H1 (cell line): ENCODE measurements at regions of chr22 and their contacts with region 1.

Region 1: GRCh38 chr22:29202212-29203192 is 3.2 kb upstream of the EMID1 start:
- DNase-seq: no peak
- H3K4me3 ChIP-seq: no peak overlapping the region; a peak in 1 of 8 replicates
- H3K27ac ChIP-seq: no peak overlapping the region
- H3K4me1 ChIP-seq: peaks cover 0 to 13% (median 6%) of the 10 kb centered on the region in 4 experiments; a peak in 5 of 7 replicates
- H3K27me3 ChIP-seq: peaks cover 0 to 12% (median 3%) of the 10 kb centered on the region in 4 experiments; a peak in 5 of 7 replicates
- CTCF ChIP-seq: peak; percentile 65 to 80 (median 74)
- EP300 ChIP-seq: no peak
- POLR2A ChIP-seq: no peak
- RAD21 ChIP-seq: peak; percentile 73 to 77

Region 2: DNA sequence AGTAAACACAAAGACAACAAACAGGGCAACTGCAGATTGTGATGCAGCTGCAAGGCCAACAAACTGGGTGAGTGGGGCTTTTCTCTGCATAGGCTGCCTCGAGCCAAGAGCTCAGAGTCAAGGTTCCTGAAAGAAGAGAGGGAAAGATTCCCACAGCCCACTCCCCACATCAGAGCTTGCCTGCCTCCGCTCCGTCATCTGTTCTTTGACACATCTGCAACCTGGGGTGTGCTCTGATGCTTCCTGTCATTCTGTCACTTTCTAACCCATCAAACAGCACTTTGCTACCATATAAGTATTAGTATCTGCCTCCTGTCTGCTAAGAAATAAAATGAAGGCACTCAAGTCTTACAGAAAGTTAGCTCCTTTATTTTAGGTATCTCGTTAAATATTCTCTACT is 187.7 kb before region 1 on chr22:
- CTCF ChIA-PET with region 1: no interaction called
- POLR2A ChIA-PET with region 1: no interaction called
- DNase-seq: no peak
- H3K4me3 ChIP-seq: no peak overlapping the region
- H3K27ac ChIP-seq: no peak overlapping the region
- H3K4me1 ChIP-seq: peaks cover 3 to 18% (median 8%) of the 10 kb centered on the region in 4 experiments; a peak in 5 of 7 replicates
- H3K27me3 ChIP-seq: no peaks in the 10 kb centered on the region; a peak in 1 of 7 replicates
- CTCF ChIP-seq: no peak
- EP300 ChIP-seq: no peak
- POLR2A ChIP-seq: no peak
- RAD21 ChIP-seq: no peak

Region 3: GRCh38 chr22:29154364-29155048 is 48.0 kb before region 1 on chr22:
- CTCF ChIA-PET with region 1: interaction called, 11 read pairs
- POLR2A ChIA-PET with region 1: no interaction called
- DNase-seq: peak; percentile 39 to 95
- H3K4me3 ChIP-seq: no peak overlapping the region
- H3K27ac ChIP-seq: no peak overlapping the region
- H3K4me1 ChIP-seq: peaks cover 7 to 22% (median 10%) of the 10 kb centered on the region in 4 experiments; a peak in 6 of 7 replicates
- H3K27me3 ChIP-seq: no peaks in the 10 kb centered on the region
- CTCF ChIP-seq: peak; percentile 96 to 97 (median 96)
- EP300 ChIP-seq: no peak
- POLR2A ChIP-seq: no peak
- RAD21 ChIP-seq: peak; percentile 91 to 95

Region 4: GRCh38 chr22:29184849-29185490 is 17.5 kb before region 1 on chr22:
- CTCF ChIA-PET with region 1: interaction called, 13 read pairs
- POLR2A ChIA-PET with region 1: interaction called, 3 read pairs
- DNase-seq: no peak
- H3K4me3 ChIP-seq: no peak overlapping the region
- H3K27ac ChIP-seq: no peak overlapping the region
- H3K4me1 ChIP-seq: peaks cover 0 to 5% (median 0%) of the 10 kb centered on the region in 4 experiments; a peak in 2 of 7 replicates
- H3K27me3 ChIP-seq: no peaks in the 10 kb centered on the region
- CTCF ChIP-seq: no peak
- EP300 ChIP-seq: no peak
- POLR2A ChIP-seq: no peak
- RAD21 ChIP-seq: no peak

Region 5: GRCh38 chr22:29216873-29217666 is 14.6 kb after region 1 on chr22:
- CTCF ChIA-PET with region 1: interaction called, 54 read pairs
- POLR2A ChIA-PET with region 1: interaction called, 5 read pairs
- DNase-seq: no peak
- H3K4me3 ChIP-seq: no peak overlapping the region
- H3K27ac ChIP-seq: no peak overlapping the region
- H3K4me1 ChIP-seq: peaks cover 0 to 15% (median 8%) of the 10 kb centered on the region in 4 experiments; a peak in 6 of 7 replicates
- H3K27me3 ChIP-seq: no peaks in the 10 kb centered on the region
- CTCF ChIP-seq: no peak
- EP300 ChIP-seq: no peak
- POLR2A ChIP-seq: no peak
- RAD21 ChIP-seq: no peak

Region 6: GRCh38 chr22:29225422-29226131 is 23.1 kb after region 1 on chr22:
- CTCF ChIA-PET with region 1: interaction called, 54 read pairs
- POLR2A ChIA-PET with region 1: interaction called, 5 read pairs
- DNase-seq: no peak
- H3K4me3 ChIP-seq: no peak overlapping the region
- H3K27ac ChIP-seq: no peak overlapping the region
- H3K4me1 ChIP-seq: peaks cover 0 to 4% (median under 1%) of the 10 kb centered on the region in 4 experiments; a peak in 4 of 7 replicates
- H3K27me3 ChIP-seq: peaks cover 0 to 5% (median 0%) of the 10 kb centered on the region in 4 experiments; a peak in 2 of 7 replicates
- CTCF ChIP-seq: no peak
- EP300 ChIP-seq: no peak
- POLR2A ChIP-seq: no peak
- RAD21 ChIP-seq: no peak

Region 7: GRCh38 chr22:29251981-29252911 is 49.7 kb after region 1 on chr22:
- CTCF ChIA-PET with region 1: interaction called, 84 read pairs
- POLR2A ChIA-PET with region 1: interaction called, 3 read pairs
- DNase-seq: no peak
- H3K4me3 ChIP-seq: no peak overlapping the region
- H3K27ac ChIP-seq: no peak overlapping the region
- H3K4me1 ChIP-seq: peaks cover 0 to 6% (median 0%) of the 10 kb centered on the region in 4 experiments; a peak in 2 of 7 replicates
- H3K27me3 ChIP-seq: no peaks in the 10 kb centered on the region
- CTCF ChIP-seq: no peak
- EP300 ChIP-seq: no peak
- POLR2A ChIP-seq: no peak
- RAD21 ChIP-seq: no peak

Region 8: DNA sequence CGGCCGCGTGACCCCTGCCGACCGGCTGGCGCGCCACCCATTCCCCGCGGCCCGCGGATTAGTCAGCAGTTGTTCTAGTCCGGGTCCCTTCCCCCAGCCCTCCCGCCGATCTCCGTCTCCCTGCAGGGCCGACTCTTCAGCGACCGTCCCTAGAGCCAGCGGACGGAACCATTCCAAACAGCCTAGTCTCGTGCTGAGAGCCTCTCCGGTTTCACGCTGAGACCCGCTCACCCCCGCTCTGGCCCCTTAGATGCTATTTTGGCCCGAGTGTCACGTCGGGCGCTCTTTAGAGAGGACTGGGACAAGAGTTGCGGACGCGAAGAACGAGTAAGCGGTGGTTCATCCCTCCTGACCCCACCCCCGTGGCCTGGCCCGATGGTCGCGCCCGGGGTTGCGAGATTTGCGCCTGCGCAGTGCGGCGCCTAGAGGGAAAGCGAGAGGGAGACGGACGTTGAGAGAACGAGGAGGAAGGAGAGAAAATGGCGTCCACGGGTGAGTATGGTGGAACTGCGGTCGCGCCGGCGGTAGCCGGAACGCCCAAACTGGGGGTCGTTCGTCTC is 65.4 kb after region 1 on chr22 and contains the starts of genes EWSR1 and RHBDD3:
- CTCF ChIA-PET with region 1: interaction called, 5 read pairs
- POLR2A ChIA-PET with region 1: interaction called, 11 read pairs
- DNase-seq: peak; percentile 69 to 100
- H3K4me3 ChIP-seq: peak within 1 kb of the TSS; percentile 80 to 96 (median 95)
- H3K27ac ChIP-seq: peak within 1 kb of the TSS; percentile 100
- H3K4me1 ChIP-seq: peaks cover 6 to 19% (median 11%) of the 10 kb centered on the region in 4 experiments; a peak in 6 of 7 replicates
- H3K27me3 ChIP-seq: no peaks in the 10 kb centered on the region
- CTCF ChIP-seq: no peak
- EP300 ChIP-seq: peak in 1 of 2 experiments; percentile 98; a peak in 2 of 3 replicates
- POLR2A ChIP-seq: peak; percentile 87 to 91; a peak in 2 of 3 replicates
- RAD21 ChIP-seq: no peak
- total RNA-seq, gene EWSR1: 385 and 387 TPM in 2 replicates
- total RNA-seq, gene RHBDD3: 72.1 and 75.7 TPM in 2 replicates